ENCODE measurements at regions of chr19 and their contacts with region 1.

Region 1: GRCh38 chr19:28242297-28242927 is 970.5 kb downstream of the UQCRFS1 start:
- DNase-seq: peak; percentile 58
- H3K4me3 ChIP-seq: no peak overlapping the region
- H3K27ac ChIP-seq: no peak overlapping the region
- H3K4me1 ChIP-seq: no peaks in the 10 kb centered on the region
- H3K27me3 ChIP-seq: peaks cover 19% of the 10 kb centered on the region

Region 2: DNA sequence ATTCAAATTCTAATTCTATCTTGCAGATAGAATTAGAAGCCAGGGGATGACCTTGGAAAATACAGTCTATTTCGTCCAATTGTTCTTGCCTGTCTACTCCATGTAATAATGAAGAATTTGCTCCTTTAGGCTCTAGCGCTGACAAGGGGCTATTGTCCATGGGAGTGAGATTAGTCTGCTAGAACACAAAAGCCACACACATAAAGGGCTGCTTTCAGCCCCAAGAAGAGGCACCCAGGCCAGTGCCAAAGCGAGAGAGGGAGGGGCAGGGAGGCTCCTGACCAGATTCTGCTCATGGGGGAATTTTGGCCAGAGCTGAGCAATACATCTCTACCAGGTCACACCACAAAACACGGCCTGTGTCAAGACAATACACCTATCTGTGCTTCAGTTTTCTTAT is 336.3 kb before region 1 on chr19:
- in situ Hi-C with region 1: no loop called
- DNase-seq: no peak
- H3K4me3 ChIP-seq: no peak overlapping the region
- H3K27ac ChIP-seq: no peak overlapping the region
- H3K4me1 ChIP-seq: no peaks in the 10 kb centered on the region
- H3K27me3 ChIP-seq: no peaks in the 10 kb centered on the region

Region 3: DNA sequence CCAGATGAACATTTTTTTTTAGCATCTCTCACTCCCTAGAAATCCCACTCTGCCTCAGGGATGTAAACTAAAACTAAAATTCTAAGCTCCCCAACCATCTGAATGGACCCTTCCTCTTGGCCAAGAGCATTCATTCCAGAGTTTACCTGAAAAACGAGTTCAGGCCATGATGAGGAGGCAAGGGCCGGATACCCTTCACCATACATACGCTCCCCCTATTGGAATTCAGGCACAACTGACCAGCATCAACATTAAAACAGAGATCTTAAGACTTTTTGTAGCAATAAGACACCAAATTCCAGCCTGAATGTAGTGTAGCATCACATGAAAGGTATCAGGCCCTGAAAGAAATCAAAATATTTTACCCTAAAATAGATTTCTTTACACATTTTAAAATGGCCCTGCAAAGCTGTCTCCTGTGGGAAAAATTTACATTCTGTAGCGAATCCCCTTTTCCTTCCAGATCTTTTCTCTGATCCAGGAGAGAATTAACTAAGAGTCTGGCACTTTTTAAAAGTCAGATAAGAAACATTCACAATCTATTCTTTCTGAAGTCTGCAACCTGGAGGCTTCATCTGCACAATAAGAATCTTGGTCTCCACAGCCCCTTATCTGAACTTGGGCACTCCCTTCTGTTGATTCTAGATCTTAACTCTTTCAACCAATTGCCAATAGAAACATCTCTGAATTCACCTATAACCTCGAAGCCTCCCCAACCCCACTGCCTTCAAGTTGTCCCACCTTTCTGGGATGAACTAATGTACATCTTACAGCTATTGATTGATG is 82.1 kb after region 1 on chr19:
- in situ Hi-C with region 1: loop called (anchors 5 kb)
- DNase-seq: no peak
- H3K4me3 ChIP-seq: no peak overlapping the region
- H3K27ac ChIP-seq: no peak overlapping the region
- H3K4me1 ChIP-seq: no peaks in the 10 kb centered on the region
- H3K27me3 ChIP-seq: peaks cover 22% of the 10 kb centered on the region; the same call in 1 of the 2 replicates

Measured in GM23248 (cell line).